ENCODE measurements at regions of chr7 and their contacts with region 1.

Region 1: DNA sequence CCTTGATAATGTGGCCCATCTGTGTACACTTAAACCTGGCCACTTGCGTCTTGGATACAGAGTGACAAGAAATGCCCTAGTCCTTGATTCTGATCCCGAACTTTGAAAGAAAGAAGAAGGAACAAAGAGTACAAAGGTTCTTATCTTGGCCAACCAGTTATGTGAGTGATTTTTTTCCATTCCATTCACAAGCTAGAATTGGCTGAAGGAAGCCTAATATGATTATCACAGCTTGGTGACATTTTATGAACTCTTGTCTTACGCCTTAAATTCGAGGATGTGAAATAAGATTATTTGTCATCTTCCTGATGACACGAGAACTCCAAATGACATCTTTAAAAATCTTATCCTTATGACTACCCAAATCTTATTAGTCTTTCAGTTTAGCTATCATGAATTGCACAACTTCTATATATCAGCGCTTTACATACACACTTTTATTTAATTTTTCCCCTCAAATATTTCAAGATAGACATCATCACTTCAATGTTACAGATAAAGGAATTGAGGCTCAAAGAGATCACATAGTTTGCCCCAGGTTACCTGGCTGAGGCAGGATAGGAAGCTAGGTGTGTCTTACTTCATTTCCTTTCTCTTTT is 13.0 kb upstream of the SP4 start:
- DNase-seq: no peak
- H3K4me3 ChIP-seq: no peak overlapping the region
- H3K27ac ChIP-seq: no peak overlapping the region
- H3K4me1 ChIP-seq: no peaks in the 10 kb centered on the region
- H3K27me3 ChIP-seq: no peaks in the 10 kb centered on the region
- CTCF ChIP-seq: no peak
- EP300 ChIP-seq: no peak
- POLR2A ChIP-seq: no peak

Region 2: GRCh38 chr7:21221129-21221528 is 193.8 kb before region 1 on chr7:
- in situ Hi-C with region 1: no loop called
- intact Hi-C with region 1: no loop called
- DNase-seq: no peak
- H3K4me3 ChIP-seq: no peak overlapping the region
- H3K27ac ChIP-seq: no peak overlapping the region
- H3K4me1 ChIP-seq: no peaks in the 10 kb centered on the region
- H3K27me3 ChIP-seq: no peaks in the 10 kb centered on the region
- CTCF ChIP-seq: no peak
- EP300 ChIP-seq: no peak
- POLR2A ChIP-seq: no peak

Region 3: GRCh38 chr7:21450946-21451345 is 36.1 kb after region 1 on chr7:
- in situ Hi-C with region 1: no loop called
- intact Hi-C with region 1: loop called (anchors 1 kb)
- DNase-seq: no peak
- H3K4me3 ChIP-seq: no peak overlapping the region
- H3K27ac ChIP-seq: no peak overlapping the region
- H3K4me1 ChIP-seq: no peaks in the 10 kb centered on the region
- H3K27me3 ChIP-seq: no peaks in the 10 kb centered on the region
- CTCF ChIP-seq: no peak
- EP300 ChIP-seq: no peak
- POLR2A ChIP-seq: no peak

Measured in transverse colon (tissue), 4 donors.